ENCODE measurements at regions of chr7 and their contacts with region 1.

Region 1: GRCh38 chr7:55019691-55020465 is 1.1 kb downstream of the EGFR start:
- DNase-seq: peak in 1 of 2 donors; percentile 91
- H3K4me3 ChIP-seq: peak overlapping the region; percentile 71
- CTCF ChIP-seq: no peak
- POLR2A ChIP-seq: no peak

Region 2: GRCh38 chr7:55110661-55111361 is 90.9 kb after region 1 on chr7:
- intact Hi-C with region 1: loop called (anchors 10 kb)
- DNase-seq: peak in 1 of 2 donors; percentile 64
- H3K4me3 ChIP-seq: no peak overlapping the region
- CTCF ChIP-seq: no peak
- POLR2A ChIP-seq: no peak

Measured in lower leg skin (tissue), 4 donors.